ENCODE measurements at regions of chr16 and their contacts with region 1.

Region 1: GRCh38 chr16:47037746-47038458 is 64.4 kb upstream of the DNAJA2 start:
- DNase-seq: peak; percentile 76 to 84 (median 83)
- H3K4me3 ChIP-seq: peak overlapping the region; percentile 42 to 76 (median 66)
- H3K27ac ChIP-seq: no peak overlapping the region
- H3K4me1 ChIP-seq: peaks cover 0 to 8% (median 4%) of the 10 kb centered on the region in 4 experiments
- H3K27me3 ChIP-seq: peaks cover 0 to 33% (median 12%) of the 10 kb centered on the region in 5 experiments

Region 2: DNA sequence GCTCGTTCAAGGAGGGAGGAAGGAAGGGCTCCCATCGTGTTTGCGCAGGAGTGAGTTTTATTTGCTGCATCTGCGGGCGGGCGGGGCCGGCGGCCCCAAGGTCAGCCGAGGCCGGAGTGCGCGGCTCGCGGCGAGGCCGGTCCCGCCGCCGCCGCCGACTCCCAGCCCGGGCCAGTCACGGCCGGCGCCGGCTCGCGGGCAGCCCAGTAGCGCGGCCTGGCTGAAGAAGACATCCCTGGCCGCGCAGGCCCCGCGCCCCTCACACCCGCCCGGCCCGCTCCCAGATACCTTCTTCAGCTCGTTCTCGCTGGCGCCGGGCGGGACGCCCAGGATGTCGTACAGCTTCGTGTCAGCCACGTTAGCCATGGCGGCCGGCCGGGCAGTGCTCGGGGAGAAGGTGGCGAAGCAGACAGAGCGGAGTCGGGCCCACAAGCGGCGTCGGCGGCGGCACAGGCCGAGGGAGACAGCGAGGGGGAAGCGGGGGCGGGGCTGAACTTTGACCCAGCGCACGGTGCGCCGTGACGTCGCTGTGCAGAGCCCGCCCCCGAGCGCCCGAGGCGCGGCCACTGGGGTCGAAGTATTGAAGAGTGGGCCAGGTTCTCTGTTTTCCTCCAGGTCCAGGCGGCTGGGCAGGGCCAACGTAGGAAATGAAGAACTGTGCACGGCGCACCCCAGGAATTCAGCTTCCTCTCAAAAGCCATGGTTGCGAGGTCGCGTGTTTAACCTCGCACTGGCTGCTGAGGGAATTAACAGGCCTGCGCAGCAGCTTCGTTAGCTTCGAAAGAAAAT is 64.5 kb before region 1 on chr16 and contains the start of gene DNAJA2:
- CTCF ChIA-PET with region 1: interaction called, 10 read pairs
- POLR2A ChIA-PET with region 1: no interaction called
- DNase-seq: peak; percentile 90 to 95 (median 94)
- H3K4me3 ChIP-seq: peak within 1 kb of the TSS; percentile 76 to 91 (median 86)
- H3K27ac ChIP-seq: peak within 1 kb of the TSS; percentile 58 to 93
- H3K4me1 ChIP-seq: peaks cover 12 to 22% (median 16%) of the 10 kb centered on the region in 4 experiments
- H3K27me3 ChIP-seq: no peaks in the 10 kb centered on the region

Region 3: DNA sequence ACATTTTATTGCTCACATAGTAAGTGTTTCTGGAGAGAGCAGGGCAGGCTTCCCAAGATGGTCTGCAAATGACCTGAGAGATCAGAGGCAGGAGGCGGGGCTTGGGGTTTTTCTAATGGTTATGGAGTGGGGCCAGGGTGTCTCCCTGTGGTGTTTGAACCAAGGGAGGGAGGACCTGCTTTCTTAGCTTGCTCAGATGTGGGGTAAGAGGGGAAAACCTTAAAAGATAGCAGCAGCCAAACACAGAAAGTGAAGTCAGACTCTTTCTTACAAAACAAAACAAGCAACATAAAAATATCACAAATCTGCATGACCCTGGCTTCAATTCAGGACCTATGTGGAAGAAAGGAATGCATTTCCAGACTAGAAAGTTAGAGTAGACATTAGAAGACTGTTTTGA is 41.5 kb before region 1 on chr16:
- CTCF ChIA-PET with region 1: no interaction called
- POLR2A ChIA-PET with region 1: no interaction called
- DNase-seq: no peak
- H3K4me3 ChIP-seq: no peak overlapping the region
- H3K27ac ChIP-seq: no peak overlapping the region
- H3K4me1 ChIP-seq: peaks cover 0 to 2% (median 0%) of the 10 kb centered on the region in 4 experiments
- H3K27me3 ChIP-seq: no peaks in the 10 kb centered on the region

Region 4: DNA sequence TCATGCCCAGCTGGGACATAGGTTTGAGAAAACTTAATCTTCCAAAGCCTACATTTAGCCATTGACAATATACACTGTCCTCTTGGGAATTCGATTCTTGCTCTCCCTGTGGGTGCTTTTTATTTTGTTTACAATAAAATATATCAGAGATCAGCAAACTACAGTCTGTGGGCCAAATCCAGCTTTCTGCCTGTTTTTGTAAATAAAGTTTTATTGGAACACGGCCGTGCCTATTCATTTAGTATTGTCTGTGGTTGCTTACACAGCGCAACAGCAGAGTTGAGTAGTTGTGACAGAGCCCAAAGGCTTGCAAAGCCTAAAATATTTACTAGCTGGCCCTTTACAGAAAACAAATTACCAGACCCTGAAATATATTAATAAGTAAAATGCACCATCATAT is 24.7 kb before region 1 on chr16:
- CTCF ChIA-PET with region 1: no interaction called
- POLR2A ChIA-PET with region 1: no interaction called
- DNase-seq: no peak
- H3K4me3 ChIP-seq: no peak overlapping the region
- H3K27ac ChIP-seq: no peak overlapping the region
- H3K4me1 ChIP-seq: peaks cover 5 to 22% (median 15%) of the 10 kb centered on the region in 4 experiments
- H3K27me3 ChIP-seq: no peaks in the 10 kb centered on the region

Region 5: GRCh38 chr16:47052666-47053640 is 15.1 kb after region 1 on chr16:
- CTCF ChIA-PET with region 1: no interaction called
- POLR2A ChIA-PET with region 1: no interaction called
- DNase-seq: no peak
- H3K4me3 ChIP-seq: no peak overlapping the region
- H3K27ac ChIP-seq: no peak overlapping the region
- H3K4me1 ChIP-seq: no peaks in the 10 kb centered on the region
- H3K27me3 ChIP-seq: peaks cover 0 to 25% (median 0%) of the 10 kb centered on the region in 5 experiments

Measured in common myeloid progenitor, CD34-positive (primary cell).